ENCODE measurements at regions of chr1 and their contacts with region 1.

Region 1: DNA sequence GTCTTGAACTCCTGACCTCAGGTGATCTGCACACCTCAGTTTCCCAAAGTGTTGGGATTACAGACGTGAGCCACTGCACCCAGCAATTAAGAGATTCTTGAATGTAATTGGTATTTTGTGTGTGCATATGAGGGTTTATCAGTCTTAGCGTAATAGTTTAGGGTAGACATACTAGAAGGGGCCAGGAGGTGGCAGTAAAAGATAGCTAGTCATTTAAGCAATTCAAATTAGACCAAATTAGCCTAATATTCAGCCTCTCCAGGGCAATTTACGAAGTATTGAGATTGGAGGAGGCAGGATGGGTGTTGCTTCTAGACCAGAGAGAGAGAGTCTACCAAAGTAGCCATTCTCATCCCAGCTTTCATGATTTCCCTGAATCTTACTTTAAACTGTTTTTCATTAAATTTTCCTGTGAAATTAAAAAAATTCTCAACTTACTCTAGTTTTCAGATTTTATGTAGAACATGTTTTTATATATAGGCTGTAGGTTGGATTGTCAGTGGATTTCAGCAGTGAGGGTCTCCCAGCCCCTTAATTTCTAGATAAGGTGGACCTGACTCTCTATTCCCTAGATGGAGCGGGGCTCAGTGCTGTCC is 119.7 kb downstream of the HHAT start:
- DNase-seq: peak; percentile 62
- H3K4me3 ChIP-seq: no peak overlapping the region
- H3K27ac ChIP-seq: no peak overlapping the region
- H3K4me1 ChIP-seq: no peaks in the 10 kb centered on the region
- H3K27me3 ChIP-seq: peaks cover 0 to 3% of the 10 kb centered on the region in 2 experiments
- CTCF ChIP-seq: peak; percentile 32 to 50
- POLR2A ChIP-seq: no peak

Region 2: GRCh38 chr1:210407207-210407886 is 41.0 kb before region 1 on chr1:
- CTCF ChIA-PET with region 1: interaction called, 23 read pairs
- POLR2A ChIA-PET with region 1: interaction called, 5 read pairs
- dilution Hi-C with region 1: no loop called
- intact Hi-C with region 1: loop called (anchors 1 kb)
- DNase-seq: peak; percentile 61
- H3K4me3 ChIP-seq: no peak overlapping the region
- H3K27ac ChIP-seq: no peak overlapping the region
- H3K4me1 ChIP-seq: no peaks in the 10 kb centered on the region
- H3K27me3 ChIP-seq: peaks cover 3 to 11% of the 10 kb centered on the region in 2 experiments
- CTCF ChIP-seq: peak; percentile 83 to 95
- POLR2A ChIP-seq: no peak

Region 3: DNA sequence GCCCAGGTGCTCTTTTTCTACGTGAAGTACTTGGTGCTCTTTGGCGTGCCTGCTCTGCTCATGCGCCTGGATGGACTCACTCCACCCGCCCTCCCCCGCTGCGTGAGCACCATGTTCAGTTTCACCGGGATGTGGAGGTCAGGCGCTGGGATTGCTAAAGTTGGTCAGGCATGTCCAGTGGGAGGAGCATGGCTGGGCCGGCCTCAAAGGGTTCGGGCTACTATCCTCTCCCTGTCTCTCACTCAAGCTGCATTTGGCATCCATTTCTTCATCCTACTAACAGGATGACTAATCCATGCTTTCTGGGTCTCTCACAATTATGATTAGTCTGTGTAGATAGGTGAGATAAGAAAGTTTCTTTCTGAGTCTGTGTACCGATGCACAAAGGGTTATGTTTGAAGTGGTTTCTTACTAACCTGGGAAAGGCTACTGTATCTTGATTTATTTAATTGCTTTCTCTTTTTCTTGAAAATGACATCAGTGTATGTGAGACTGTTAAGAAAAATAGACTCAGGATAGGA is 16.2 kb after region 1 on chr1:
- CTCF ChIA-PET with region 1: interaction called, 11 read pairs
- POLR2A ChIA-PET with region 1: no interaction called
- dilution Hi-C with region 1: no loop called
- intact Hi-C with region 1: no loop called
- DNase-seq: no peak
- H3K4me3 ChIP-seq: no peak overlapping the region
- H3K27ac ChIP-seq: no peak overlapping the region
- H3K4me1 ChIP-seq: no peaks in the 10 kb centered on the region
- H3K27me3 ChIP-seq: no peaks in the 10 kb centered on the region
- CTCF ChIP-seq: no peak
- POLR2A ChIP-seq: no peak

Region 4: DNA sequence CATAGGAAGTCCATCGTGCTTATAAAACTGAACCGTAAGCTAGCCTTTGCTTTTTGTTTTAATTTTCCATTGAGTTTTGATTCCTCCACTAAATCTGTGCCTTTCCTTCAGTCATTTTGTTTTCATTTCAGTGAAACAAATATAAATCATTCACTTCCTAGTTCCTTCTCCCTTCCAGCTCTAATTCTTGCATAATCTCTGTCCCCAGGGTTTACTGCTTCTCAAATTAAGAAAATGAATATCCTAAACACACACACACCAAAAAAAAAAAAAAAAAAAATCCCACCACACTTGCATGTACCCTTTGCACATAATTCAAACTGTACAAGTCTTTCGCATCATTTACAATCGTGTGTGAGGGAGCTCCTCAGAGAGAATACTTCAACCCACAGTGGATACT is 678.8 kb after region 1 on chr1:
- CTCF ChIA-PET with region 1: interaction called, 163 read pairs
- POLR2A ChIA-PET with region 1: no interaction called
- dilution Hi-C with region 1: no loop called
- intact Hi-C with region 1: no loop called
- DNase-seq: no peak
- H3K4me3 ChIP-seq: no peak overlapping the region
- H3K27ac ChIP-seq: no peak overlapping the region
- H3K4me1 ChIP-seq: no peaks in the 10 kb centered on the region
- H3K27me3 ChIP-seq: peaks cover 0 to 16% of the 10 kb centered on the region in 2 experiments
- CTCF ChIP-seq: no peak
- POLR2A ChIP-seq: no peak